Prostate gland (tissue), 2 donors: ENCODE measurements at regions of chr10 and their contacts with region 1.

Region 1: GRCh38 chr10:88879534-88880281 is at the start of gene STAMBPL1:
- DNase-seq: peak; percentile 19
- H3K4me3 ChIP-seq: peak within 1 kb of the TSS; percentile 61 to 62
- H3K27ac ChIP-seq: peak within 1 kb of the TSS; percentile 74 to 83
- H3K4me1 ChIP-seq: no peaks in the 10 kb centered on the region
- H3K27me3 ChIP-seq: no peaks in the 10 kb centered on the region
- CTCF ChIP-seq: no peak
- POLR2A ChIP-seq: no peak
- total RNA-seq, gene STAMBPL1: 3.6 to 5.8 TPM

Region 2: GRCh38 chr10:88926566-88927415 is 47.1 kb after region 1 on chr10:
- intact Hi-C with region 1: loop called (anchors 2 kb)
- DNase-seq: no peak
- H3K4me3 ChIP-seq: no peak overlapping the region
- H3K27ac ChIP-seq: no peak overlapping the region
- H3K4me1 ChIP-seq: no peaks in the 10 kb centered on the region
- H3K27me3 ChIP-seq: no peaks in the 10 kb centered on the region
- CTCF ChIP-seq: no peak
- POLR2A ChIP-seq: no peak

Region 3: DNA sequence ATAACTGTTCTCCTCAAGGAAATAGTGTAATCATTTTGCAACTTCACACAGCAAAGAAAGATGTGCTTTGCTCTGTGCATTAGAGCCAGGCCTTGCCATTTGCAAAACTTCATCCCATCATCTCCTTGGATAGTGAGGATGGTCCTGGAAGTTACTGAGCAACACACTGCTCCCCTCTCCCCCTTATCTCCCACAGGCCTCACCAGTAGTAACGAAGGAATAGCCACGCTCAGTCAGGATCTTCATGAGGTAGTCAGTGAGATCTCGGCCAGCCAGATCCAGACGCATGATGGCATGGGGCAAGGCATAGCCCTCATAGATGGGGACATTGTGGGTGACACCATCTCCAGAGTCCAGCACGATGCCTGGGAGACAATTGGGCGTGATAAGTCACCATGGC is 61.3 kb after region 1 on chr10:
- intact Hi-C with region 1: no loop called
- DNase-seq: no peak
- H3K4me3 ChIP-seq: no peak overlapping the region
- H3K27ac ChIP-seq: no peak overlapping the region
- H3K4me1 ChIP-seq: no peaks in the 10 kb centered on the region
- H3K27me3 ChIP-seq: no peaks in the 10 kb centered on the region
- CTCF ChIP-seq: no peak
- POLR2A ChIP-seq: no peak

Region 4: GRCh38 chr10:89074120-89074519 is 194.4 kb after region 1 on chr10:
- intact Hi-C with region 1: no loop called
- DNase-seq: no peak
- H3K4me3 ChIP-seq: no peak overlapping the region
- H3K27ac ChIP-seq: no peak overlapping the region
- H3K4me1 ChIP-seq: no peaks in the 10 kb centered on the region
- H3K27me3 ChIP-seq: no peaks in the 10 kb centered on the region
- CTCF ChIP-seq: no peak
- POLR2A ChIP-seq: no peak